Heart right ventricle (tissue), 16 donors: ENCODE measurements at regions of chr9 and their contacts with region 1.

Region 1: GRCh38 chr9:122076773-122077172 is 16.3 kb downstream of the TTLL11 start:
- DNase-seq: no peak
- ATAC-seq: no peak
- H3K4me3 ChIP-seq: no peak overlapping the region
- H3K27ac ChIP-seq: peak overlapping the region in 4 of 10 donors; percentile 56 to 83 (median 79)
- H3K4me1 ChIP-seq: peaks cover 0 to 20% (median 14%) of the 10 kb centered on the region in 9 donors
- H3K27me3 ChIP-seq: no peaks in the 10 kb centered on the region
- CTCF ChIP-seq: no peak

Region 2: DNA sequence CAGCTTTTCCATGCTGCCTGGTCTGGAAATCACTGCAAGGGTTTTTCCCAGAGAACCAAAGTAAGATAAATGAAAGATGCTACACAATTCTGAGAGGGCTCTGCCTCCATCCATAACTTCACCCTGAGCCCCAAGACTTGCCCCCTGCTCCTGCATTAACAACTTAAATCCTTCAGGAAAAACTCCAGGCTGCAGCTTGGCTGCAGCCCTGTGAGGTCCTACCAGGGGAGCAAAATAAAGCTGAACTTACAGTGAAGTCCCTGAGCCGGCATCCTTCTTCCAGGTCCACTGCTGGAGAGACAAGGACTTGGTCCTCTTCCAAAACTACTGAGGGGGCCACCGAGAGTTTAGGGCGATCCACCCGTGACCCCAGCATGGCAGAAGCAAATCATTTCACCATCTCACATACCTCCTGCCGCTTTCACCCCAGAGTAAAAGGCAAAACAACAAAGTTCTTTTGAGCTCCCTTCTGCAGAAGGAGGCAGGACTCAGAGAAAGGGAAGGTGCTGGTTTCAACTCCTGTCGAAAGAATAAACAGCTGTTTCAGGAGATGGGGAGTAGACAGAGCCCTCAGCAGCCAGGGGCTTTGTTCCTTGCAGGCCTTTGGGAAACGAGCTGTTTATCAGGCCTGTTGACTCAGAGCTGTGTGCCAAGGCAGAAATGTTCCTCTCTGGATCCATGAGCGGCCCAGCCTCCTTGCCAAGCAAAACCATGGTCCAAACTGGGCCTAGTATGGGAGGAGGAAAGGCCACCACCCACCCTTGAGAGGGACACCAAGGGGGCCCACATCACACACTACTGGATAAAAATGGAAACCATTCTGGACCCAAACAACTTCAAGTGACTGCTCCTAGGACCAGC is 597.7 kb before region 1 on chr9:
- intact Hi-C with region 1: no loop called
- DNase-seq: no peak
- ATAC-seq: peak; percentile 21 to 59 (median 42)
- H3K4me3 ChIP-seq: peak overlapping the region in 1 of 10 donors; percentile 7
- H3K27ac ChIP-seq: peak overlapping the region; percentile 46 to 87 (median 66)
- H3K4me1 ChIP-seq: peaks cover 34 to 81% (median 59%) of the 10 kb centered on the region in 9 donors
- H3K27me3 ChIP-seq: no peaks in the 10 kb centered on the region
- CTCF ChIP-seq: no peak

Region 3: DNA sequence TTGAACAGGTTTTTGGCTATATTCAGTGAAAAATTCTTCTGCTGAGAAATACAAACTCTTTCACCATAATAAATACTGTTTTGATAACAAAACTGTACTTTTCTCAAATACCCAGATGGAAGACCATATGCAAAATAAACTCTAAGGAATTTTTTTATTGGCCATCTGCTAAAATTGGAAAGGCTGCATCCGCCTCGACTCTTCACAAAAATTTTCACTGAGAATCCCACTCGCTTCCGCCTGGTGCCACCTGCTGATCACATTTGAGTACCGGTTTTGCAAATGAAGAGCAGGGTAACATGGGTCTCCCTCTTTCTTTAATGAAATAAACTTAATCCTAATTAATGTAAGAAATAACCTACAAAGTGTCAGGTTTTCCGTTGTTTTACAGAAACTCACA is 60.0 kb before region 1 on chr9:
- intact Hi-C with region 1: no loop called
- DNase-seq: no peak
- ATAC-seq: no peak
- H3K4me3 ChIP-seq: no peak overlapping the region
- H3K27ac ChIP-seq: no peak overlapping the region
- H3K4me1 ChIP-seq: peaks cover 0 to 30% (median 21%) of the 10 kb centered on the region in 9 donors
- H3K27me3 ChIP-seq: no peaks in the 10 kb centered on the region
- CTCF ChIP-seq: peak in 6 of 9 donors; percentile 33 to 56 (median 38)

Region 4: DNA sequence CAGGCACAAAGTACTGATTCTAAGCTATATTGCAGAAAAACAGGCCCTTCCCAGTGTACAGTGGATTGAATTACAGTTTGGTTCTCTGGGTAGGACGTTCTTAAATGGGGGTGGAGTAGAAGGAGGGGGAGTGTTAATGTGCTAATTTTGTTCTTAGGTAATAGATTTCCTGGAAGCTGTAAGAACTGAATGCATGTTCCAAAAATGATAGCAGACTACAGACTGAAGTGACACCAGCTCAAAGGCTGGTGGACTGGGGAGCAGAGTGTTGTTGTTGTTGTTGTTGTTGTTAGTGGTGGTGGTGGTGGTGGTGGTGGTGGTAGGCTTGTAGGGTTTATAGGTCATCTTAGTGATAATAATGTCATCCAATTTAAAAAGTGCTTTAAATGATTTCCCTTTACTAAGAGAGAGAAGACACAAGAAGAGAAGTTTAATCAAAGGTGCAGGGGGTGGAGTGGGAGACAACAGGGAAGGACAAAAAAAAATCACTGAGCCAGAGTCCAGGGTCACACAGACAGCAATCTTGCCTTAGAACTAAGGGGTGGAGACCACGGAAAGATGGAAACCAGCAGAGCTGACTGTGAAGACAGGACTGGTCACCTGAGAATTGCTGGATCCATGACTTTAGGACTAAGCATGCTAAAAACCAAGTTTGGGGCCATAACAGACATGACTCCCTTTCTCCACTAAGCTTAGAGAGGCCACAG is 10.7 kb before region 1 on chr9:
- intact Hi-C with region 1: loop called in 1 of 10 experiments (anchors 1 kb)
- DNase-seq: no peak
- ATAC-seq: peak; percentile 28 to 87 (median 76)
- H3K4me3 ChIP-seq: no peak overlapping the region
- H3K27ac ChIP-seq: peak overlapping the region in 6 of 10 donors; percentile 29 to 61 (median 40)
- H3K4me1 ChIP-seq: peaks cover 0 to 32% (median 15%) of the 10 kb centered on the region in 9 donors
- H3K27me3 ChIP-seq: no peaks in the 10 kb centered on the region
- CTCF ChIP-seq: no peak

Region 5: GRCh38 chr9:122464633-122465567 is 388.1 kb after region 1 on chr9:
- intact Hi-C with region 1: no loop called
- DNase-seq: peak; percentile 29 to 83
- ATAC-seq: peak; percentile 51 to 93 (median 80)
- H3K4me3 ChIP-seq: peak overlapping the region in 9 of 10 donors; percentile 20 to 51 (median 41)
- H3K27ac ChIP-seq: peak overlapping the region in 2 of 10 donors; percentile 5 to 73
- H3K4me1 ChIP-seq: peaks cover 0 to 12% (median 8%) of the 10 kb centered on the region in 9 donors
- H3K27me3 ChIP-seq: peaks cover 0 to 31% (median 6%) of the 10 kb centered on the region in 7 donors
- CTCF ChIP-seq: peak; percentile 73 to 87 (median 80)